A549 (cell line): ENCODE measurements at regions of chr10 and their contacts with region 1.

Region 1: DNA sequence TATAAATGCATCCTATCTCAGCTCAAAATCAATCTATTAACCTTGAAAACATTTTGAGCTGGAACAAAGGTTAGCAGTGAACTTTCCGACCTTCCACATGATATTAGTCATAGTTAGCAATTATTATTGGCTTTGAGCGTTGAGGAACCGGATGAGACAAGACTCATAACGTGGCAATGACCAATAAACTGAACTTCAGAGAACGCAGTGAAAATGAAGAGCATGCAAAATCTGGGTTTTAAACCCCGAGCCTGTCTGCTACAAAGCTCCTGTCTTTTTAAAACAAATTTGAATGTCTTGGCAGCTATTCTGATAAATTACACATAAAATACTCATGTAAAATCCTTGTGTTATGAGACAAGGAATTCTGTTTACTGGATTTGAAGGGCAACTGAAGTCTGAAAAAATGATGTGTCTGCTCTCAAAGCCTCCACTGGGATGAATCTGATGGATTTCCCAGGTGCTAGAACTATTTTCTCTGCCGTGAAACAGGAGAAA is 74.7 kb upstream of the ITGB1 start:
- DNase-seq: peak; percentile 44 to 75
- ATAC-seq: peak; percentile 65 to 84; a peak in 5 of 6 replicates
- H3K4me3 ChIP-seq: 0 out of 3 replicates have a peak overlapping the region, but pooled peaks have one; percentile 5
- H3K27ac ChIP-seq: peak overlapping the region; percentile 74 to 89
- H3K4me1 ChIP-seq: peaks cover 24% of the 10 kb centered on the region
- CTCF ChIP-seq: no peak; the same call in 2 of the 3 replicates
- EP300 ChIP-seq: peak in 1 of 2 experiments; percentile 70; a peak in 1 of 5 replicates
- POLR2A ChIP-seq: no peak
- RAD21 ChIP-seq: peak in 1 of 2 experiments; percentile 27; a peak in 2 of 5 replicates

Region 2: GRCh38 chr10:32995751-32996150 is 37.0 kb before region 1 on chr10:
- CTCF ChIA-PET with region 1: no interaction called
- POLR2A ChIA-PET with region 1: no interaction called
- DNase-seq: no peak
- ATAC-seq: peak in 1 of 2 experiments; percentile 23; a peak in 4 of 6 replicates
- H3K4me3 ChIP-seq: no peak overlapping the region
- H3K27ac ChIP-seq: peak overlapping the region; percentile 84 to 99
- H3K4me1 ChIP-seq: peaks cover 53% of the 10 kb centered on the region
- CTCF ChIP-seq: no peak
- EP300 ChIP-seq: no peak
- POLR2A ChIP-seq: no peak
- RAD21 ChIP-seq: no peak

Region 3: DNA sequence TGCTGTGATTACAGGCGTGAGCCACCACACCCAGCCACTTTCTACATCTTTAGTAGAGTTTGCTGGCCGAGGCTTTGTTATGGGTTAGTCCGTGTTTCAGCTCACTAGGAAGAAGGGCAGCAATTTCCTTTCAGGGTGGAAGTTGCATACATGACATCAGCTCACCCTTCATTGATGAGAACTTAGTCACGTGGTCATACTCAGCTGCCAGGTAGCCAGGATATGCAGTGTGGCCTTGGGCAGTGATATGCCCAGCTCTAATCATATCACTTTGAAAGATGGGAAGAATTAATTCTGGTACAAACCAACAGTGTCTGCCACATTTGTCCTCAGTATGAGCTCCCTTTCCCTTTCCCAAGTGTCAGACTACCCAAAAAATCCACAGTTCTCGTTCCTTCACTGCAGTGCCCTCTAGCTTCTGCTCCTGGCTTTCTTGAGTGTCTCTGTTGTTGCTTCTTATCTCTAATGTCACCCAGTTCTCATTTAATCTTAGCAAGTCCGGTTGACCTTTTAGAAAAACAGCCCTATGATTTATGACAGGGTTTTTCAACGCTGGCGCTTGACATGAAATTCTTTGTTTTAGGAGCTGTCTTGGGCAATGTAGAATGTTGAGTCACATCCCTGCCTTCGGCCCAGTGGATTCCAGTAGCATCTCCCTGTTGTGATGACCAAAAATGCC is 34.0 kb after region 1 on chr10:
- CTCF ChIA-PET with region 1: interaction called, 10 read pairs
- POLR2A ChIA-PET with region 1: interaction called, 4 read pairs
- DNase-seq: peak; percentile 29 to 88
- ATAC-seq: peak; percentile 87 to 90
- H3K4me3 ChIP-seq: no peak overlapping the region
- H3K27ac ChIP-seq: peak overlapping the region; percentile 69 to 84
- H3K4me1 ChIP-seq: peaks cover 33% of the 10 kb centered on the region
- CTCF ChIP-seq: peak; percentile 61
- EP300 ChIP-seq: peak; percentile 63 to 90; a peak in 4 of 5 replicates
- POLR2A ChIP-seq: no peak
- RAD21 ChIP-seq: peak; percentile 64 to 65